ENCODE measurements at regions of chr3 and their contacts with region 1.

Region 1: GRCh38 chr3:48465531-48466378 is 19.2 kb downstream of the ATRIP start:
- DNase-seq: peak; percentile 87
- ATAC-seq: peak; percentile 93
- H3K4me3 Mint-ChIP-seq: peak overlapping the region; percentile 97
- H3K27ac Mint-ChIP-seq: peak overlapping the region; percentile 98
- H3K4me1 Mint-ChIP-seq: peaks cover 43% of the 10 kb centered on the region
- H3K27me3 Mint-ChIP-seq: no peaks in the 10 kb centered on the region

Region 2: DNA sequence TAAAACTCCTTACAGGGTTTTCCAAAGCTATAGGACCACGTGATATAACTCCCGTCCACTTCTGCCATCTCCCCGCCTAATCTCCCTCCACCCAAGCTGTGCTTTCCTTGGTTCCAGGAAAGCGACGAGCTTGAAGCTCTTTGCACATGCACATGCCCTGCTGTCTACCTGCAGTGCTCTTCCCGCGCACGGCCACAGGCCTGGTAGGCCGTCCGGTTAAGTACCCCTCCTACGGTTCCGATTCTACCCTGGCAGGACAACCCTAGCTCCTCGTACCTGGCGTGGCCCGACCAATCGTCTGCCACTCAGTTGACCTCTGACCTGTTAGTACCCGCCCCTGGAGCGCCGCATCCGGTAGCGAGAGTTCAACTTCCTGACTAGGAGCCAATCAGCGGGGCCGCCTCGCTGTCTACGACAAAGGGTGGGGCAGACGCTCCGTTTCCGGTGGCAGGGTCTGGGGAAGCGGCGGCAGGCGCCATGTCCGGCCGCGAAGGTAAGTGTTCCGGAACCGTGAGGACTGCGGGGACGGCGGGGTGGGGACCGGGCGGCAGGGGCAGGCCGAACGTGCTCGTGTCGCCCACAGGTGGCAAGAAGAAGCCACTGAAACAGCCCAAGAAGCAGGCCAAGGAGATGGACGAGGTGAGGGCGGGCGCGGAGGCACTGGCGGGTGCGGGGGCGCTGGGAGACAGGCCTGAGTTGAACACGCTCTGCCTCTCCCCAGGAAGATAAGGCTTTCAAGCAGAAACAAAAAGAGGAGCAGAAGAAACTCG is 25.8 kb before region 1 on chr3 and contains the starts of genes CCDC51 and TMA7:
- POLR2A ChIA-PET with region 1: interaction called, 57 read pairs
- DNase-seq: peak; percentile 95
- ATAC-seq: peak; percentile 92
- H3K4me3 Mint-ChIP-seq: peak within 1 kb of the TSS; percentile 99
- H3K27ac Mint-ChIP-seq: peak within 1 kb of the TSS; percentile 97
- H3K4me1 Mint-ChIP-seq: peaks cover 33% of the 10 kb centered on the region
- H3K27me3 Mint-ChIP-seq: no peaks in the 10 kb centered on the region
- total RNA-seq, gene CCDC51: 11.5 to 12.2 TPM
- total RNA-seq, gene TMA7: 260 to 263 TPM

Region 3: GRCh38 chr3:48446425-48447193 is 19.1 kb before region 1 on chr3 and contains the start of gene ATRIP:
- POLR2A ChIA-PET with region 1: interaction called, 57 read pairs
- DNase-seq: peak; percentile 95
- ATAC-seq: peak; percentile 97
- H3K4me3 Mint-ChIP-seq: peak within 1 kb of the TSS; percentile 95
- H3K27ac Mint-ChIP-seq: peak within 1 kb of the TSS; percentile 95
- H3K4me1 Mint-ChIP-seq: peaks cover 36% of the 10 kb centered on the region
- H3K27me3 Mint-ChIP-seq: no peaks in the 10 kb centered on the region
- total RNA-seq, gene ATRIP: 17.0 to 19.9 TPM

Region 4: GRCh38 chr3:48478596-48479555 is 13.1 kb after region 1 on chr3:
- POLR2A ChIA-PET with region 1: interaction called, 16 read pairs
- DNase-seq: peak; percentile 75
- ATAC-seq: peak; percentile 91
- H3K4me3 Mint-ChIP-seq: peak overlapping the region; percentile 85
- H3K27ac Mint-ChIP-seq: peak overlapping the region; percentile 98
- H3K4me1 Mint-ChIP-seq: peaks cover 26% of the 10 kb centered on the region
- H3K27me3 Mint-ChIP-seq: no peaks in the 10 kb centered on the region